ENCODE measurements at regions of chr2 and their contacts with region 1.

Region 1: GRCh38 chr2:143259368-143259958 is 130.2 kb downstream of the ARHGAP15 start:
- DNase-seq: peak; percentile 89
- H3K4me3 Mint-ChIP-seq: peak overlapping the region; percentile 59
- H3K27ac Mint-ChIP-seq: peak overlapping the region; percentile 90
- H3K4me1 Mint-ChIP-seq: peaks cover 73% of the 10 kb centered on the region
- H3K27me3 Mint-ChIP-seq: no peaks in the 10 kb centered on the region

Region 2: DNA sequence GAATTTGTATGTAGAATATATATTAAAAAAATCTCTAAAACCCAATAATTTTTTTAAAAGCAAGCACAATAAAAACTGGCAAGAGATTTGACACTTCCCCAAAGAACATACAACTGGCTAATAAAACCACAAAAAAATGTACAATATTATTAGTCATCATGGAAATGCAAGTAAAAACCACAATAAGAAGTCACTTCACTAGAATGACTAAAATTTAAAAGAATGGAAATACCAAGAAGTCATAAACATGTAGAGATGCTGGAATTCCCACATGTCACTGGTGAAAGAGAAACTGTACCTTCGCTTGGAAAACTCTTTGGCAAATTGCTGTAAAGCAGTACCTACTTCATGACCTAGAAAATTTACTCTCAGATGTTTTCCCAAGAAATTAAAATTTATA is 425.4 kb before region 1 on chr2:
- CTCF ChIA-PET with region 1: no interaction called
- intact Hi-C with region 1: no loop called
- DNase-seq: no peak
- H3K4me3 Mint-ChIP-seq: no peak overlapping the region
- H3K27ac Mint-ChIP-seq: no peak overlapping the region
- H3K4me1 Mint-ChIP-seq: no peaks in the 10 kb centered on the region
- H3K27me3 Mint-ChIP-seq: no peaks in the 10 kb centered on the region

Region 3: DNA sequence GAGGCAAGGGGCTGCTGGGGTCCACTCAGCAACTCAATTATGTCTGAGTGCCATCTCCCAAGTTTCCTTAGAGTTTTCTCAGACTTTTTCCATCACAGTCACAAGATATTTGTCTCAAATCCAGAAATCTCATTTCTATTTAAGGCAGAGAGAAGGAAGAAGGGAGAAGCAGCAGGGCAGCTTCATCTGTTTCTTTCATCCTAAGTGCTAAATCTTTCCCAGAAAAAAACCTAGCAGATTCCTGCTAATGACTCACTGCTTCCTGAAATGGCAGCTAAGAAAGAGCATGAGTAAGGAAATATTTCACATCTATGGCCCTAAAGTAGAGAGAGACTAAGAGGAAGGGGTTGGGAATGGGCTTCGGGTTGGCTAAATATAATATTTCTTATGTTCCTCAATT is 294.0 kb before region 1 on chr2:
- CTCF ChIA-PET with region 1: no interaction called
- intact Hi-C with region 1: no loop called
- DNase-seq: no peak
- H3K4me3 Mint-ChIP-seq: no peak overlapping the region
- H3K27ac Mint-ChIP-seq: no peak overlapping the region
- H3K4me1 Mint-ChIP-seq: no peaks in the 10 kb centered on the region
- H3K27me3 Mint-ChIP-seq: peaks cover 11% of the 10 kb centered on the region

Region 4: GRCh38 chr2:143034292-143035074 is 225.0 kb before region 1 on chr2:
- CTCF ChIA-PET with region 1: interaction called, 15 read pairs
- intact Hi-C with region 1: loop called (anchors 1 kb)
- DNase-seq: peak; percentile 78
- H3K4me3 Mint-ChIP-seq: no peak overlapping the region
- H3K27ac Mint-ChIP-seq: no peak overlapping the region
- H3K4me1 Mint-ChIP-seq: peaks cover 14% of the 10 kb centered on the region
- H3K27me3 Mint-ChIP-seq: peaks cover 7% of the 10 kb centered on the region

Region 5: DNA sequence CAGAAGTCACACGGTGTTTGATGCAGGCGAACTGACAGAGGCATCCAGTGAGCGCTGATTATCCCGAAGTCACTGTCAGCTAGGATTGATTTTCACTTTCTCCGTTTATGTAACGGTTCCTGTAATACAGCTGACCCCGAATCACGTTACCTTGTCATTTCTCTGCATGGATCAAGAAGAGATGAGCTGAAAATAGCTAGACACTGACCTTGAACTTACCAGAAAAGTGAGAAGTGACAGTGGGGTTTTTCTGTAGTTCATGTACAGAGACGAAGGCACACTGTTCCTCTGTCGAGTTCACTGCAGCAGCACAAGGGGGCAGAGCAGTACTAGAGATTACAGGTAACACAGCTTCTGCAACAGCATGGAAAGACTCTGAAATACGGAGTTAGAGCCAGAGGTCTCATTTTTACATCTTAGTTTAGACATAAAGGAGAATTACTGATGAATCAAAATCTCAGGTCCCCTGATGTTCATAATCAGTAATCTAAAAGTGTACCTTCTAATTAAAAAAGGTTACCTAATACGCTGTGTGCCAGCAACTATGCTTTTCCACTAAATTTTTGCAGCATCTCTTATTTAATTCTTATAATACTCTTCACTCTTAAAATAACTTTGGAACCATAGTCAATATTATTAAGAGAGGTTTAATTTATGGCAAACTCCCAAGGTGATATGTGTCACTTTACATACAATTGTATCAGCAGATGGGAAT is 97.2 kb before region 1 on chr2:
- CTCF ChIA-PET with region 1: interaction called, 128 read pairs
- intact Hi-C with region 1: loop called (anchors 1 kb)
- DNase-seq: peak; percentile 77
- H3K4me3 Mint-ChIP-seq: peak overlapping the region; percentile 2
- H3K27ac Mint-ChIP-seq: peak overlapping the region; percentile 53
- H3K4me1 Mint-ChIP-seq: peaks cover 82% of the 10 kb centered on the region
- H3K27me3 Mint-ChIP-seq: no peaks in the 10 kb centered on the region

Region 6: DNA sequence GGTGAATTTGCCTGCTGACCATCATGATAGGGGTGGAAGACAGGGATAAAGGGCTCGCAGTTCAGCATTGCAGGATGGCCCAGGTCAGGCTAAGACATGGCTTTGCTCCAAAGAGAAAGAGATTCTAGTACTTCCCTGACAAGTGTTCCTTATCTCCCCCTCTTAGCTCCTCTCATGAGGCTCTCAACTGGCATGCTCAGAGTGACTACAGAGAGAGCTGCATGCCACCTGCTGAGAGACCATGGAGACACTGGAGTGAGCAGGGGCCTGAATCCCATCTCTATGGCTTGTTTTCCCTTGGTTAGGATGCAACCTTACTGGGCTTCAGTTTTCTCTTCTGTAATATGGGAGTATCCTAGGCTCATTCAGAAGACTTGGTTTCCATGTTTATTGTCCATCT is 35.9 kb before region 1 on chr2:
- CTCF ChIA-PET with region 1: interaction called, 28 read pairs
- intact Hi-C with region 1: loop called (anchors 1 kb)
- DNase-seq: no peak
- H3K4me3 Mint-ChIP-seq: no peak overlapping the region
- H3K27ac Mint-ChIP-seq: no peak overlapping the region
- H3K4me1 Mint-ChIP-seq: peaks cover 54% of the 10 kb centered on the region
- H3K27me3 Mint-ChIP-seq: no peaks in the 10 kb centered on the region

Region 7: GRCh38 chr2:143397884-143398614 is 138.6 kb after region 1 on chr2:
- CTCF ChIA-PET with region 1: interaction called, 4 read pairs
- intact Hi-C with region 1: loop called (anchors 5 kb)
- DNase-seq: no peak
- H3K4me3 Mint-ChIP-seq: no peak overlapping the region
- H3K27ac Mint-ChIP-seq: peak overlapping the region; percentile 11
- H3K4me1 Mint-ChIP-seq: peaks cover 47% of the 10 kb centered on the region
- H3K27me3 Mint-ChIP-seq: no peaks in the 10 kb centered on the region

Region 8: GRCh38 chr2:144198117-144198516 is 938.7 kb after region 1 on chr2:
- CTCF ChIA-PET with region 1: no interaction called
- intact Hi-C with region 1: loop called (anchors 5 kb)
- DNase-seq: peak; percentile 17
- H3K4me3 Mint-ChIP-seq: no peak overlapping the region
- H3K27ac Mint-ChIP-seq: peak overlapping the region; percentile 86
- H3K4me1 Mint-ChIP-seq: peaks cover 65% of the 10 kb centered on the region
- H3K27me3 Mint-ChIP-seq: no peaks in the 10 kb centered on the region

Region 9: GRCh38 chr2:144572977-144573376 is 1313.5 kb after region 1 on chr2:
- CTCF ChIA-PET with region 1: no interaction called
- intact Hi-C with region 1: loop called (anchors 10 kb)
- DNase-seq: no peak
- H3K4me3 Mint-ChIP-seq: no peak overlapping the region
- H3K27ac Mint-ChIP-seq: no peak overlapping the region
- H3K4me1 Mint-ChIP-seq: peaks cover 12% of the 10 kb centered on the region
- H3K27me3 Mint-ChIP-seq: peaks cover 14% of the 10 kb centered on the region